Activated CD4-positive, alpha-beta memory T cell treated with anti-CD3 and anti-CD28 coated beads, Interleukin-2, amount 10 ng/mL, durations not matched to agents 7 days and 5 days (primary cell): ENCODE measurements at regions of chr7 and their contacts with region 1.

Region 1: GRCh38 chr7:128425850-128426249 is 16.1 kb upstream of the IMPDH1 start:
- DNase-seq: peak; percentile 82
- H3K4me3 Mint-ChIP-seq: no peak overlapping the region
- H3K27ac Mint-ChIP-seq: no peak overlapping the region
- H3K4me1 Mint-ChIP-seq: peaks cover 14% of the 10 kb centered on the region
- H3K27me3 Mint-ChIP-seq: peaks cover 9% of the 10 kb centered on the region

Region 2: DNA sequence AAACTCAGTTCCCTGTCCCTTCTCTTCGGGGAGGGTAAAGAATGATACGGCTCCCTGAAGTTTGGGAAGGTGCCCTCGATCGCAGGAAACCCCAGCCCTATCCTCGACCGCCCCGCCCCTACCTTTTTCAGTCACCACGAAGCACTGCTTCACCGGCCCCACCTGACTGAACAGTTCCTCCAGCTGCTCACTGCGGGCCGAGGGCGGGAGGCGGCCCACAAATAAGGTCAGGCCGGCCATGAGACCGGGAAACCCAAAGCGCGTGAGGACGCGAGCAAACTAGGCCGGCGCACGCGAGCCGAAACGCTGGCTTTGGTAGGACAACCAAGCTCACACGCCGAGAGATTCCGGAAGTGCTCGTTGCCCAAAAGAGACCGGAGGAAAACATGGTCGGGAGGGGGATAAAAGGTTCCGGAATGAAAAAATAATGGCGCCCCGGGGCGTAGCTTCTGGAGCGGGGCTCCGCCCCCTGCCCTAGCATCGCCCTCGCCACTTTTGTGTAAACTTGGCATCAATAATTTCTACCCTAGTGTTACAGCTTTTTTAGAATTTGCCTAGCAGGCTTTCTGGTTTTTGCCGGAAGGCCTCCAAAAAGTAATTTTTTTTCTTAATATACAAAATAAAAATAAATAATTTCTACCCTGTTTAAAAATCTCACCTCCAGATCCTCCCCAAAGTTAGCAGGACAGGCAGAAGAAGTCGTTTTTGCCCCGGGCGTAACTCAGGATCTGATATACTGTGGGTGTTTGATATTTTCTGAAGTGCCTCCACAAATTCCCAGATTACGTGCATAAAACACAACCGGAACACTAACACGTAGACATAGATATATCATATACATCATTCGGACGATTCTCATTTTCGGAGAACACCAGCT is 82.1 kb before region 1 on chr7 and contains the start of gene RBM28:
- CTCF ChIA-PET with region 1: interaction called, 17 read pairs
- POLR2A ChIA-PET with region 1: no interaction called
- DNase-seq: peak; percentile 88
- H3K4me3 Mint-ChIP-seq: peak within 1 kb of the TSS; percentile 93
- H3K27ac Mint-ChIP-seq: peak within 1 kb of the TSS; percentile 88
- H3K4me1 Mint-ChIP-seq: peaks cover 31% of the 10 kb centered on the region
- H3K27me3 Mint-ChIP-seq: peaks cover 15% of the 10 kb centered on the region
- total RNA-seq, gene RBM28: 30.7 to 34.8 TPM

Region 3: DNA sequence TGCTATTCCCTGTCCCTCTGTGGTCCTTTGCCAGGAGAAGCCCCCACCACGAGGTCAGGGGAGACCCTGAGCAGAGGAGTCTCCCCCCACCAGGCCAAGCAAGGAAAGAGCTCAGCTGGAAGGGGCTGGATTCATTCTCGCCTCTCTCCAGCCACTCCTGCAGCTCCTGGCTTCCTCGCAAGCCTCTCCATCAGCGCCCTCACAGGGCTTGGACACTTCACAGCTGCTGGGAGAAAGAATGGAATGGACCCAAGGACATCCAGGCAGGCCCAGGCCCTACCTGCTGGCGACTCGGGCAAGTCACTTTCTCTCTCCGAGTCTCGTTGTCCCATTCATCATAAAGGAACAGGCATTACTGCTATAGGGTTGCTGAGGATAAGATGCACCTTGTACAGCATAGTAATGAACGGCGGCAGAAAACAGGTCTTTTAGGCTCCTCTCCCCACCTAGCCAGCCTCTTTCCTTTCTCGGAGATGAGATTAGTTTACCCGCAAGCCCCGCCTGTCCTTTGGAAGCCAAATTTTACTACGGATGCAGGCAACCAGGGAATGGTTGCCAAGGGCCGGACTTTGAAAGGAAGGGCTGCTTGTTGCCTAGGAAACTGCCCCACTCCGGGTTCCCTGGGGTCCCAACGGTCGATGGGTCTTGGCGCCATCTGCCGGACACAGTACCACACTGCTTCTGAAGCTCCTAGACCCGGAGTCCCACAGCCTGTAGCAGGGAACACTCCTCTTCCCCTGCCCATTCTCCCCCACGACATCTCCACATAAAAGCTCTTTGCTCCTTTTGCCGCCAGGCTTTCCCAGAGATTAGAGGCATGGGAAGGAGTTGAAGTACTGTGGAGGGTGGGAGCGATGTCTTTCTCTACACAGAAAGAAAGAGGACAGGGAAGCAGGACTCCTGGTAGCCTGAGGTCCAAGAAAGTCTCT is 38.4 kb before region 1 on chr7:
- CTCF ChIA-PET with region 1: interaction called, 22 read pairs
- POLR2A ChIA-PET with region 1: no interaction called
- DNase-seq: peak; percentile 66
- H3K4me3 Mint-ChIP-seq: no peak overlapping the region
- H3K27ac Mint-ChIP-seq: no peak overlapping the region
- H3K4me1 Mint-ChIP-seq: no peaks in the 10 kb centered on the region
- H3K27me3 Mint-ChIP-seq: peaks cover 3% of the 10 kb centered on the region

Region 4: DNA sequence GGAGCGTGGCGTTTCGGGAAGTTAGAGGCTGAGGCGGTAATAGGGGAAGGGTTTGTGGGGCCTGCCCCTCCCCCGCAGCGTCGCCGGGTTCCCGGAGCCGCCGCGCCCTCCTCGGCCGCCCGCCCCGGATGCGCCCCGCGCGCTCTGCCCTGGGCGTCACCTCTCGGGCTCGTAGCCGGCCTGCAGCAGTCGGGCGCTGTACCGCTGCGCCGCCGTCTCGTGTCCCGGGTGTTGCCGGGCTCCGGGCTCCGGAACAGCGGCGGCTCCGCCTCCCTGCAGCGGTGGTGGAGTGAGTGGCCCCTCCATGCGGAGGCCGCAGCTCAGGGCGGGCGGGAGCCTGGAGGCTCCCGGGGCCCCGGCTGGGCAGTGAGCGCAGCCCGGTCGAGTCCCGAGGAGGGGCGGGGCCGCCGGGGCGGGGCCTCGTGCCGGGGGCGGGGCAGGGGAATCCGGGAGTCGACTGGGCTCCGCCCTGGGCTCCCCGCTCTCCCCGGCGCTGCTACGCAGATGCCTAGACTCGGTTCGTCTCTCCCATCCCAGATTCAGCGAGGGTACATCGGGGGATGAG is 16.2 kb before region 1 on chr7 and contains the start of gene IMPDH1:
- CTCF ChIA-PET with region 1: interaction called, 167 read pairs
- POLR2A ChIA-PET with region 1: interaction called, 21 read pairs
- DNase-seq: peak; percentile 88
- H3K4me3 Mint-ChIP-seq: peak within 1 kb of the TSS; percentile 87
- H3K27ac Mint-ChIP-seq: peak within 1 kb of the TSS; percentile 80
- H3K4me1 Mint-ChIP-seq: peaks cover 35% of the 10 kb centered on the region
- H3K27me3 Mint-ChIP-seq: peaks cover 20% of the 10 kb centered on the region
- total RNA-seq, gene IMPDH1: 64.7 to 67.4 TPM

Region 5: DNA sequence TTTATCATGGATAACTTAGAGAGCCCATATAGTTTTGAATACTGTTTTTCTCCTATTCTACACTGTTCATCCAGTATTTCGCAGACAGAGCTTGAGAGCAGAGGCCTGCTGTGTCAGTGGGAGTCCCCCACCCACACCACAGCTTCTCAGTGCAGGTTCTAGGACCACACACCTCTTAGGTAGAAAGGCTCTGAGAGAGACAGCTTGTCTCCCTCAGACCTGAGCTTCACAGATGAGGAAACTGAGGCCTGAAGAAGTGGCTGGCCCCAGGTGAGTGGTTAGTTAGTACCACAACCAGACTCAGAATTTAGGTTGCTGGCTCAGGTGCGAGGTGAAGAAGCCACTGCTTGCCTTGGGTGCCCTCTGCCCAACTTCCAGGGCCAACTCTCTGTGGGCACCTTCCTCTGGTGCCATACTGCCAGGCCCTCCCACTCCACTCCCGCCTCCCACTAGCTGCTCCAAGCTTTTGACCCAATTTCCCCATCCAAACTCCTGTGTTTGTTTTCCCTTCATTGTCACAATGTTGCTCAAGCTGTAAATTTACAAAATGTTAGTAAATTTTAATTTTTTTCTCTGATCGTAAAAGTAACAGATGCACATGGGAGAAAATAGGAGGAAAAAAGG is 22.2 kb after region 1 on chr7:
- CTCF ChIA-PET with region 1: interaction called, 85 read pairs
- POLR2A ChIA-PET with region 1: interaction called, 5 read pairs
- DNase-seq: no peak
- H3K4me3 Mint-ChIP-seq: no peak overlapping the region
- H3K27ac Mint-ChIP-seq: no peak overlapping the region
- H3K4me1 Mint-ChIP-seq: peaks cover 11% of the 10 kb centered on the region
- H3K27me3 Mint-ChIP-seq: peaks cover 20% of the 10 kb centered on the region

Region 6: GRCh38 chr7:128755819-128756476 is 330.1 kb after region 1 on chr7:
- CTCF ChIA-PET with region 1: no interaction called
- POLR2A ChIA-PET with region 1: no interaction called
- DNase-seq: no peak
- H3K4me3 Mint-ChIP-seq: no peak overlapping the region
- H3K27ac Mint-ChIP-seq: no peak overlapping the region
- H3K4me1 Mint-ChIP-seq: no peaks in the 10 kb centered on the region
- H3K27me3 Mint-ChIP-seq: no peaks in the 10 kb centered on the region

Region 7: DNA sequence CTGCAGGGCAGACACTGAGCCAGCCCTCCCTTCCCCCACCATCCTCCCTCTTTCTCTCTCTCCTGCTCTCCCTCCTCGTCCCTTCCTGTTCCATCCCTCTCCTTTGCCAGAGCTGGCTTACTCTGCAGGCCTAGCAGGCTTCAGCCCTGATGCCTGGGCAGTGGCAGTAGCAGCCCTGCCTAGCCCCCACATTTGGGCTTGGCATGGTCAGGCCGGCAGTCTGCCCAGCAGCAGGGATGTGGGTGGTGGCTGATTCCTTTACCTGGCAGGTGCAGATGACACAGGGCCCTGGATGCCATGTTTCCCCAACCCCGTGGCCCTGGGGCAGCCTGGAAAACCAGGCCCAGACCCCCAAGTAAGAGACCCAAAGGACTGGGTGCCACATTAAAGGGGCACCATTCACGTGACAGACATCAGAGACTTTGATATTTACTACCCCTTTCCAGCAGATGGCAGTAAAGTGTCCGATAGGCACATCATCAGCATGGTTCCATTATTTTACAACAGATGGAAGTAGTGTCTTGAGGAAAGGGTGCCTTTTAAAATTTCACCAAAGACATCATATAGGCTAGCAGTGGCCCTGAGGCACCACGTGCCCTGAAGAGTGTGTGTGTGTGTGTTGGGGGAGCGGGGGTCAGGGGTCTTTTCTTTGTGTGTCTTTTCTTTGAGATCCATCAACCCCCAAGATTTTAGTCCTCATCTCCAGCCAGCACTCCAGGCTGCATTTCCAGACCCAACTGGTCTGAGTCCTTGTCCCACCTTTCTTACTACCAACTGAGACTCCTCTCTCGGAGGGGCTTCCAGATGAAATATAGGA is 478.7 kb after region 1 on chr7:
- CTCF ChIA-PET with region 1: no interaction called
- POLR2A ChIA-PET with region 1: no interaction called
- DNase-seq: peak; percentile 27
- H3K4me3 Mint-ChIP-seq: no peak overlapping the region
- H3K27ac Mint-ChIP-seq: no peak overlapping the region
- H3K4me1 Mint-ChIP-seq: no peaks in the 10 kb centered on the region
- H3K27me3 Mint-ChIP-seq: peaks cover 27% of the 10 kb centered on the region